Activated CD4-positive, alpha-beta memory T cell treated with anti-CD3 and anti-CD28 coated beads, Interleukin-2, amount 10 ng/mL, durations not matched to agents 7 days and 5 days (primary cell): ENCODE measurements at regions of chr11 and their contacts with region 1.

Region 1: GRCh38 chr11:43358801-43359421 is at the start of gene TTC17:
- DNase-seq: peak; percentile 95
- H3K4me3 Mint-ChIP-seq: peak within 1 kb of the TSS; percentile 96
- H3K27ac Mint-ChIP-seq: peak within 1 kb of the TSS; percentile 94
- H3K4me1 Mint-ChIP-seq: peaks cover 47% of the 10 kb centered on the region
- H3K27me3 Mint-ChIP-seq: no peaks in the 10 kb centered on the region
- total RNA-seq, gene TTC17: 71.7 to 72.8 TPM

Region 2: GRCh38 chr11:43311791-43312607 is 46.9 kb before region 1 on chr11 and contains the start of gene API5:
- CTCF ChIA-PET with region 1: interaction called, 39 read pairs
- POLR2A ChIA-PET with region 1: interaction called, 62 read pairs
- DNase-seq: peak; percentile 94
- H3K4me3 Mint-ChIP-seq: peak within 1 kb of the TSS; percentile 91
- H3K27ac Mint-ChIP-seq: peak within 1 kb of the TSS; percentile 84
- H3K4me1 Mint-ChIP-seq: peaks cover 44% of the 10 kb centered on the region
- H3K27me3 Mint-ChIP-seq: no peaks in the 10 kb centered on the region
- total RNA-seq, gene API5: 98.0 to 103 TPM

Region 3: DNA sequence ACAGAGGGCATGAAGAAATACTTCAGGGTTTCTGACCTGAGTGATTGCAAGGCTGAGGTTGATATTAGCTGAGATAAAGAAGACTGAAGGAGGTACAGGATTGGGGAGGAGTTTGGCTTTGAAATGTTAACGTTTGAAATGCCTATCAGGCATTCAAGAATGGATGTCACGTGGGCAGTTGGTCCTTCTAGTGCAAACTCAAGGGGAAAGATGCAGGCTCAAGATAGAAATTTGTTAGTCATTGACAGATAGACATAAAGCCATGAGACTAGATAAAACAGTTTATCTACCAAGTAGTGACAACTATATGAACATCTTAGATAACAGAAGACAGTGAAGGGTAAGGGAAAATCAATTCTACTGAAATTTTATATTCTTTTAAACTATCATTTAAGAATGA is 22.9 kb after region 1 on chr11:
- CTCF ChIA-PET with region 1: no interaction called
- POLR2A ChIA-PET with region 1: interaction called, 19 read pairs
- DNase-seq: no peak
- H3K4me3 Mint-ChIP-seq: no peak overlapping the region
- H3K27ac Mint-ChIP-seq: no peak overlapping the region
- H3K4me1 Mint-ChIP-seq: peaks cover 18% of the 10 kb centered on the region
- H3K27me3 Mint-ChIP-seq: no peaks in the 10 kb centered on the region

Region 4: GRCh38 chr11:43393765-43394355 is 34.9 kb after region 1 on chr11:
- CTCF ChIA-PET with region 1: interaction called, 3 read pairs
- POLR2A ChIA-PET with region 1: interaction called, 24 read pairs
- DNase-seq: no peak
- H3K4me3 Mint-ChIP-seq: no peak overlapping the region
- H3K27ac Mint-ChIP-seq: no peak overlapping the region
- H3K4me1 Mint-ChIP-seq: peaks cover 37% of the 10 kb centered on the region
- H3K27me3 Mint-ChIP-seq: no peaks in the 10 kb centered on the region

Region 5: GRCh38 chr11:43419460-43419859 is 60.5 kb after region 1 on chr11:
- CTCF ChIA-PET with region 1: interaction called, 8 read pairs
- POLR2A ChIA-PET with region 1: interaction called, 15 read pairs
- DNase-seq: peak; percentile 46
- H3K4me3 Mint-ChIP-seq: no peak overlapping the region
- H3K27ac Mint-ChIP-seq: no peak overlapping the region
- H3K4me1 Mint-ChIP-seq: peaks cover 4% of the 10 kb centered on the region
- H3K27me3 Mint-ChIP-seq: no peaks in the 10 kb centered on the region

Region 6: DNA sequence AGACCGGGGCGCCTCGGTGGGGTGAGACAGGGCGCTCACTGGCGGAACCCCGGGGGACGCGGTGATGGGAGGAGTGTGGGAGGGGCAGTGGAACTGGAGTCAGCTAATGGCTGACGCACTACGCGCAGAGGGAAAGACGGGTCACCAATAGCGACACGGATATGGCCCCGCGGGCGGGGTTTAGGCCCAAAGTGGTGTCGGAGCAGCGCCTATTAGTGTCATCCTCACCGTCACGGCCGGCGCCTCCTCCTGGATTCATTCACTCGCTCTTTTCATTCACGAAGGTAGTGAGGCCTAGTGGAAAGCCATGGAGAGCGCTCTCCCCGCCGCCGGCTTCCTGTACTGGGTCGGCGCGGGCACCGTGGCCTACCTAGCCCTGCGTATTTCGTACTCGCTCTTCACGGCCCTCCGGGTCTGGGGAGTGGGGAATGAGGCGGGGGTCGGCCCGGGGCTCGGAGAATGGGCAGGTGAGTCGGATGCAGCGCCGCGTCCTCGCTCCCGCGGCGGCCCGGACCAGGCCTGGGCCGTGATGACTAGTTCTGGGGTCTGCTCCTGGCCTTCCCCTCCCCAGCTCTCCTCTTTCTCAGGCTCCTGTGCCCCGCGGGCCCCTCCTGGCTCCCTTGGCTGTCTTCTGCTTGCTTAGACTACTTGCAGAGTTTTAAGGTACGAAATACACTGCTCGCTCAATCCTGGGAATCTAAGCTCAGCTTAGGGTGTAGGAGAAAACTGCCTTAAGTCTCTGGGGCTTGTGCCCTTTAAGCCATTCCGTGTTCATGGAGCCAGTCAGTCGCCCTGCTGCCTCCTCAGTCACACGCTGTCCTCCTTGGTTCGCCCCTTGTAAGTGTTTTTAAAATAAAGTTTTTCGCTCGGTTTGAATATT is 321.9 kb after region 1 on chr11 and contains the start of gene HSD17B12:
- CTCF ChIA-PET with region 1: no interaction called
- POLR2A ChIA-PET with region 1: interaction called, 10 read pairs
- DNase-seq: peak; percentile 99
- H3K4me3 Mint-ChIP-seq: peak within 1 kb of the TSS; percentile 92
- H3K27ac Mint-ChIP-seq: peak within 1 kb of the TSS; percentile 92
- H3K4me1 Mint-ChIP-seq: peaks cover 36% of the 10 kb centered on the region
- H3K27me3 Mint-ChIP-seq: peaks cover 15% of the 10 kb centered on the region
- total RNA-seq, gene HSD17B12: 35.2 to 40.7 TPM